Caco-2 (cell line): ENCODE measurements at regions of chr4 and their contacts with region 1.

Region 1: GRCh38 chr4:121656269-121656641 is 40.5 kb downstream of the ANXA5 start:
- DNase-seq: peak; percentile 66 to 72
- H3K4me3 ChIP-seq: no peak overlapping the region
- H3K4me3 Mint-ChIP-seq: no peak overlapping the region
- H3K27ac Mint-ChIP-seq: no peak overlapping the region
- H3K4me1 ChIP-seq: no peaks in the 10 kb centered on the region
- H3K4me1 Mint-ChIP-seq: peaks cover 9% of the 10 kb centered on the region
- H3K27me3 ChIP-seq: no peaks in the 10 kb centered on the region
- H3K27me3 Mint-ChIP-seq: no peaks in the 10 kb centered on the region
- CTCF ChIP-seq: peak in 1 of 2 experiments; percentile 56

Region 2: GRCh38 chr4:121192480-121192879 is 463.8 kb before region 1 on chr4:
- CTCF ChIA-PET with region 1: interaction called, 3 read pairs
- POLR2A ChIA-PET with region 1: no interaction called
- intact Hi-C with region 1: loop called (anchors 5 kb)
- DNase-seq: peak in 1 of 2 experiments; percentile 31
- H3K4me3 ChIP-seq: no peak overlapping the region
- H3K4me3 Mint-ChIP-seq: no peak overlapping the region
- H3K27ac Mint-ChIP-seq: no peak overlapping the region
- H3K4me1 ChIP-seq: no peaks in the 10 kb centered on the region
- H3K4me1 Mint-ChIP-seq: no peaks in the 10 kb centered on the region
- H3K27me3 ChIP-seq: no peaks in the 10 kb centered on the region
- H3K27me3 Mint-ChIP-seq: no peaks in the 10 kb centered on the region
- CTCF ChIP-seq: peak; percentile 49 to 73

Region 3: GRCh38 chr4:121370729-121371325 is 285.4 kb before region 1 on chr4:
- CTCF ChIA-PET with region 1: interaction called, 5 read pairs
- POLR2A ChIA-PET with region 1: no interaction called
- intact Hi-C with region 1: loop called (anchors 1 kb)
- DNase-seq: peak in 1 of 2 experiments; percentile 43
- H3K4me3 ChIP-seq: no peak overlapping the region
- H3K4me3 Mint-ChIP-seq: no peak overlapping the region
- H3K27ac Mint-ChIP-seq: no peak overlapping the region
- H3K4me1 ChIP-seq: no peaks in the 10 kb centered on the region
- H3K4me1 Mint-ChIP-seq: no peaks in the 10 kb centered on the region
- H3K27me3 ChIP-seq: no peaks in the 10 kb centered on the region
- H3K27me3 Mint-ChIP-seq: peaks cover 9% of the 10 kb centered on the region
- CTCF ChIP-seq: peak; percentile 51 to 52

Region 4: DNA sequence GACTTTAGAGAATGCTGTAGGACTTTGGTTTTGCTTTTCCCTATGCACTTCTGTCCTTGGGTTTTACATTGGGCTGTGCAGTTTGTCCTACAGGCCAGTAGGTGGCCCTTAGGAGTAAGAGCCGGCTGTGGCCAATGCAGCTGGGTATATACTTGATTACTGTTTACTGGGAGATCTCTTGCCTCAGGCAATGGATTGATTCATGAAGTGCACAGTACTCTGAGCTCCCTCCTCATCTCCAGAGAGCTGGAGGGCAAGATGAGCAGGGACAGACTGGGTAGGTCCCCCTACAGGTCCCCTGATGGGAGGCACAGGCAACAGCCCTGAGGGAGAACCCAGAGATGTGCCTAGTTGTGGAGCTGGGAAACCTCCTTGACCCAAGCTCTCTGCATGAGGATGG is 171.6 kb before region 1 on chr4:
- CTCF ChIA-PET with region 1: no interaction called
- POLR2A ChIA-PET with region 1: no interaction called
- intact Hi-C with region 1: loop called (anchors 1 kb)
- DNase-seq: peak in 1 of 2 experiments; percentile 40
- H3K4me3 ChIP-seq: no peak overlapping the region
- H3K4me3 Mint-ChIP-seq: no peak overlapping the region
- H3K27ac Mint-ChIP-seq: no peak overlapping the region
- H3K4me1 ChIP-seq: no peaks in the 10 kb centered on the region
- H3K4me1 Mint-ChIP-seq: no peaks in the 10 kb centered on the region
- H3K27me3 ChIP-seq: no peaks in the 10 kb centered on the region
- H3K27me3 Mint-ChIP-seq: no peaks in the 10 kb centered on the region
- CTCF ChIP-seq: peak; percentile 43 to 60

Region 5: DNA sequence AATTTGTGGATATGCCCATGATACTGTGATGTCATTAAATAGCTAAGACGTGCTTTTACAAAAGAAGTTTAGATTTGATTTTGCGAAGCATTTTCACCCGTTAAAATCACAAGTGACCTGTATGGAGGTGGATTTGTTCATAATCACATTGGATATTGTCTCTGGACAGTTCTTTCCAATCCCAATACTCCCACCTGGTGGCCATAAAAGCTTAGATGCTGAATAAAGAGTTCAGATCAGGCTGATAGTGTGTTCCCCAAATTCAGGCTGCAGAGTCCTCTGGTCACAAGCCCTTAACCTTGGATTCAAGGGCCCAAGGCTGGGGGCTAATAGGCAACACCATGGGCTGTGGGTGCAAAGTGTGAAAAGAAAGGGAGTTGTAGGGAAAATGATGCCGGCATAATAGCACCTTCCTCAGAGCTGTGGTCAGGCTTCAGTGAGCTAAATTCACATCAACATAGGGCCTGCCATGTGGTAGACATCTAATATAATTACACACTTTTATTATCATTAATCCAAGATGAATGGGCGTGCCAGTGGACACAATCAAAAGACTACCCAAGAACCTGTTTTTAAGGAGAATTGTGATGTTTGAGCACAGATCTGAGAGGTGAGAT is 80.6 kb after region 1 on chr4:
- CTCF ChIA-PET with region 1: interaction called, 3 read pairs
- POLR2A ChIA-PET with region 1: no interaction called
- intact Hi-C with region 1: loop called (anchors 1 kb)
- DNase-seq: peak; percentile 47 to 70
- H3K4me3 ChIP-seq: no peak overlapping the region
- H3K4me3 Mint-ChIP-seq: no peak overlapping the region
- H3K27ac Mint-ChIP-seq: no peak overlapping the region
- H3K4me1 ChIP-seq: no peaks in the 10 kb centered on the region
- H3K4me1 Mint-ChIP-seq: peaks cover 9% of the 10 kb centered on the region
- H3K27me3 ChIP-seq: no peaks in the 10 kb centered on the region
- H3K27me3 Mint-ChIP-seq: peaks cover 3% of the 10 kb centered on the region
- CTCF ChIP-seq: peak; percentile 49 to 57